ENCODE measurements at regions of chr13 and their contacts with region 1.

Region 1: DNA sequence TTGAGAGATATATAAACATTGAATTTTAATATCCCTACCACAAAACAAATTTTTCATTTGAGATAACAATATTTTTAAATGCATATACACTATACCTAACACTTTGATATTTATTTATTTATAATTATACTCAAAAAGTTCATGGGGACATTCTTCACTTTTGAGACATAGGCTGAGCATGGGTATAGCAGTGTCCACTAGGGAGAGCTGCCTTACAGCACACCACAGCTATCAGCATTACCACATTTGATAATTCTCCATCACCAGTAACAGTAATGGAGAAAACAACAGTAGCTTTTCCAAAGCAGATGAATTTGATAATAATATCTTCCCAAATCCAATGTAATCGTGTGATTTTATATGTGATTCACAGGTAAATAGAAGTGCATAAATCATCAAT is 626.1 kb downstream of the DACH1 start:
- DNase-seq: no peak
- ATAC-seq: peak; percentile 34

Region 2: DNA sequence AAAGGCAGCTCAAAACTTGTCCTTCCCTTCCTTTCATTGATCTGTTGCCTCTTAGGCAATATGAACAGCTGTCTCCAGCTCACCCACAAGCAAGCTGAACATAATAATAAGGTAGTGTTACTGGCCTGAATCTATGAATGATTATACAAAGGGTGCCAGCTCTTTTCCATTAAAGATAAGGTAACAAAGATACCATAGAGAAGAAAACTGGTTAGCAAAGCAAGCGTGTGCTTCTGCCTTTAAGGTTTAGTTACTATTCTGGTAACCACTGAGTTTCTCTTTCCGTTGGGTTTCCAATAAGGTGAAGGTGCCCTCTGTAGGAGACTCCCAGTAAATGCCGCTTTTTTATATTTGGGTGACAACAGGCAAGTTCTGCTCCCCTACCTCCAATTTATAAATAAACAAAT is 638.2 kb after region 1 on chr13:
- intact Hi-C with region 1: loop called (anchors 10 kb)
- DNase-seq: no peak
- ATAC-seq: peak; percentile 68